Tibial artery (tissue), 4 donors: ENCODE measurements at regions of chr10 and their contacts with region 1.

Region 1: GRCh38 chr10:58177362-58177947 is 90.2 kb downstream of the IPMK start:
- DNase-seq: no peak
- H3K4me3 ChIP-seq: no peak overlapping the region
- H3K27ac ChIP-seq: no peak overlapping the region
- H3K4me1 ChIP-seq: no peaks in the 10 kb centered on the region
- H3K27me3 ChIP-seq: no peaks in the 10 kb centered on the region
- CTCF ChIP-seq: peak; percentile 63 to 69

Region 2: GRCh38 chr10:58291538-58292174 is 114.2 kb after region 1 on chr10:
- intact Hi-C with region 1: loop called (anchors 5 kb)
- DNase-seq: peak in 1 of 2 donors; percentile 25
- H3K4me3 ChIP-seq: no peak overlapping the region
- H3K27ac ChIP-seq: no peak overlapping the region
- H3K4me1 ChIP-seq: no peaks in the 10 kb centered on the region
- H3K27me3 ChIP-seq: no peaks in the 10 kb centered on the region
- CTCF ChIP-seq: peak; percentile 75 to 85